Ascending aorta (tissue), 2 donors: ENCODE measurements at regions of chr20 and their contacts with region 1.

Region 1: GRCh38 chr20:46089417-46090388 is at the start of gene NCOA5:
- DNase-seq: peak; percentile 76 to 97
- H3K4me3 ChIP-seq: peak within 1 kb of the TSS; percentile 75 to 97
- H3K27ac ChIP-seq: peak within 1 kb of the TSS; percentile 99
- H3K4me1 ChIP-seq: peaks cover 3 to 36% of the 10 kb centered on the region in 2 donors
- H3K27me3 ChIP-seq: no peaks in the 10 kb centered on the region
- CTCF ChIP-seq: peak in 1 of 3 experiments; percentile 27
- total RNA-seq, gene NCOA5: 70.4 TPM

Region 2: DNA sequence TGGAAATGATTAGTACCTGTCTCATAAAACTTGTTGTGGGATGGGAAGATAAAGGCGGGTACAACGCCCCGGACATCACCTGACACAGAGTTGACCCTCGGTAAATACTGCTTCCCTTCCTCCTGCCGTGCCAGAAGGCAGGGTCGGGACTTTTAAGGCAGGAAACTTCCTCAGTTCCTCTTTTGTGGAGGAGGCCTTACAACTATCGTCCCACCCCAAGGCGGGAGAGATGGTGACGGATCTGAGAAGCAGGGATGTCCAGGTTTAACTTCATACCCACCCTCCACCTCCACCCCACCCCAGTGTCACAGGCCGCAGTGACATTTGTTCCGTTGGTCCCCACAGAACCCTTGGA is 297.4 kb before region 1 on chr20:
- intact Hi-C with region 1: loop called (anchors 5 kb)
- DNase-seq: no peak
- H3K4me3 ChIP-seq: peak overlapping the region; percentile 79 to 89
- H3K27ac ChIP-seq: peak overlapping the region; percentile 94
- H3K4me1 ChIP-seq: peaks cover 4% of the 10 kb centered on the region in 2 donors
- H3K27me3 ChIP-seq: no peaks in the 10 kb centered on the region
- CTCF ChIP-seq: no peak

Region 3: DNA sequence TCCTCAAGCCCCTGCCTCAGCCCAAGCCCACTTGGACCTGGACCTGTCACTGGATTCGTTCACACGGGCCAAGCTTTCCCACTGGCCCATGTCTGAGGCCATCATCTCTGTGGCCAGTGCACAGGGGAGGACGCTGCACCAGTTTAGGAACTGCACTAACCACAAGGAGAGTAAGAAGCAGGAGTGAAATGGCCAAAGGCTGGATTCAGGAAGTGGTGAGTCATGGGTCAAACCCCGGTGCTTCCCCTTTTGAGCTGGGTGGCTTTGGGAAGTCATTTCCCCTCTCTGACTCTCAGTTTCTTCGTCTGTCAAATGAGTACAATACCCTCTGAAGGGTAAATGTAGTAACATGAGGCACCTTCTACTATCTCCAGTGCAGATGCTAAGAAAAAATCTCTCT is 116.3 kb after region 1 on chr20:
- intact Hi-C with region 1: no loop called
- DNase-seq: peak; percentile 14 to 71
- H3K4me3 ChIP-seq: no peak overlapping the region
- H3K27ac ChIP-seq: no peak overlapping the region
- H3K4me1 ChIP-seq: no peaks in the 10 kb centered on the region
- H3K27me3 ChIP-seq: peaks cover 4% of the 10 kb centered on the region
- CTCF ChIP-seq: no peak

Region 4: GRCh38 chr20:46400828-46401477 is 311.2 kb after region 1 on chr20:
- intact Hi-C with region 1: loop called (anchors 5 kb)
- DNase-seq: no peak
- H3K4me3 ChIP-seq: peak overlapping the region; percentile 20 to 22
- H3K27ac ChIP-seq: peak overlapping the region; percentile 77 to 82
- H3K4me1 ChIP-seq: peaks cover 39 to 69% of the 10 kb centered on the region in 2 donors
- H3K27me3 ChIP-seq: no peaks in the 10 kb centered on the region
- CTCF ChIP-seq: no peak